ENCODE measurements at regions of chr18 and their contacts with region 1.

Region 1: GRCh38 chr18:79400091-79400590 is 4.4 kb downstream of the NFATC1 start:
- DNase-seq: no peak
- H3K4me3 ChIP-seq: peak overlapping the region; percentile 43
- CTCF ChIP-seq: no peak

Region 2: GRCh38 chr18:79366177-79367094 is 33.7 kb before region 1 on chr18:
- in situ Hi-C with region 1: no loop called
- DNase-seq: peak; percentile 97
- H3K4me3 ChIP-seq: no peak overlapping the region
- CTCF ChIP-seq: no peak

Region 3: DNA sequence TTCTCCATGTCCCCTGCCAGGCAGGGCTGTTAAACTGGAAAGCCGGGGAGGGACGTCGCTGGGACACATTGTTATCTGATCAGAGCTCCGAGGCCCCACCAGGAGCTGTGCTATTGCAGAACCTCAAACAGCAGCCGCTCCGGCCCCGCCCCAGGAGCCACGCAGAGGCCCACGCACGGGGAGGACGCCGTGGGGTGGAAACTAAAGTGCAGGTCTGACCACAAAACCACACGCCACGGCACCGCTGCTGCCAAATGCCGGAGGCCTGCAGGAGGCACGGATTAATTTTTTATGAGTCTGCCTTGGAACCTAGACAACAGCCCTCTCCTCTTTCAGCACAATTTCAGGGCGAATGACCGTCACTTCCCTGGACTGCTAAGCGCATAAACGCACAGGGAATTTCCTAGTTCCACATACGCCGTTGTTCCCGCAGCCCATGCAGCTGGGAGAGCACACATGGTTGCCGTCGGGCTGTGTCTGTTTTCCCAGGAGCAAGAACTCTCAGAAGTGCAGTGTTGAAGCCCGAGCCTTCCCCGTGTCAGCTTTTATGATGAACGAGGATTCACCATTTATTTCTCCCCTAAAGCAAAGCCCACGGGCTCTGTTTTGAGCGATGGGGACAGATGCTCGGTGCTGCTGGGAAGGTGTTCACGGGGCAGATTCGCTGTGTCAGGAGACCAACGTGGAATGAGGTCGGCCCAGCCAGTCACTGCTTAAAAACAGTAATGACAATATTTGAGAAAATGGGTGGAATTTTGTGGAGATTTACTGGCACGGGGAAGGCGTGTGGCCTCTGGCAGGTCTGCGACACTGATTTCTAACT is 39.3 kb after region 1 on chr18:
- in situ Hi-C with region 1: loop called (anchors 5 kb)
- DNase-seq: peak; percentile 76
- H3K4me3 ChIP-seq: no peak overlapping the region
- CTCF ChIP-seq: no peak

Region 4: DNA sequence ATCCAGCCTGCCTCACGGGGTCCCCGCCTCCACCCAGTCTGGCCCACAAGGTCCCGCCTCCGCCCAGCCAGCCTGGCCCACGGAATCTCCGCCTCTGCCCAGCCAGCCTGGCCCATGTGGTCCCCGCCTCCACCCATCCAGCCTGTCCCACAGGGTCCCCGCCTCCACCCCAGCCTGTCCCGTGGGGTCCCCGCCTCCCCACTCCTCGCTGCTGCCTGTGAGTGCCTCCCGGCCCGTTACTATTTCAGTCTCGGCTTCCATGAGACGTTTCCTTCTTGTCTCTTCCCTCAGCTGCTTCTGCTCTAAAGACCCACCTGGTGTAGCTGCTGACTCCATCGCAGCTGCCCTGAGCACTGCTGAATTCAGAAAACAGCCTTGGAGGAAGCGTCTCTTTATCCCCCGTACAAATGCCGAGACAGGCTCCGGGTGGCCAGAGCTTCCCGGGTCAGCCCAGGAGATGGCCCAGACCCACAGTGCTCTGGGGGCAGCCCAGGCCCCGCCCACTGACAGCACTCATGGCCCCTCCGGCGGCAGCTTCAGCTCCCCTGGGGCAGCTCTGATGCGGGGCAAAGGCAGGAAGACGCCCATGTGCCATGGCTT is 65.4 kb after region 1 on chr18:
- in situ Hi-C with region 1: loop called (anchors 5 kb)
- DNase-seq: no peak
- H3K4me3 ChIP-seq: no peak overlapping the region
- CTCF ChIP-seq: no peak

Region 5: GRCh38 chr18:79504034-79504433 is 103.9 kb after region 1 on chr18:
- in situ Hi-C with region 1: loop called (anchors 5 kb)
- DNase-seq: no peak
- H3K4me3 ChIP-seq: no peak overlapping the region
- CTCF ChIP-seq: no peak

Measured in astrocyte of the cerebellum (primary cell).